Activated CD4-positive, alpha-beta memory T cell treated with anti-CD3 and anti-CD28 coated beads for 36 hours (primary cell): ENCODE measurements at regions of chr1 and their contacts with region 1.

Region 1: GRCh38 chr1:154607609-154608396 is at the start of gene ADAR:
- DNase-seq: peak; percentile 96
- H3K4me3 Mint-ChIP-seq: peak within 1 kb of the TSS; percentile 90
- H3K27ac Mint-ChIP-seq: peak within 1 kb of the TSS; percentile 98
- H3K4me1 Mint-ChIP-seq: peaks cover 71% of the 10 kb centered on the region
- H3K27me3 Mint-ChIP-seq: no peaks in the 10 kb centered on the region
- total RNA-seq, gene ADAR: 270 to 289 TPM

Region 2: DNA sequence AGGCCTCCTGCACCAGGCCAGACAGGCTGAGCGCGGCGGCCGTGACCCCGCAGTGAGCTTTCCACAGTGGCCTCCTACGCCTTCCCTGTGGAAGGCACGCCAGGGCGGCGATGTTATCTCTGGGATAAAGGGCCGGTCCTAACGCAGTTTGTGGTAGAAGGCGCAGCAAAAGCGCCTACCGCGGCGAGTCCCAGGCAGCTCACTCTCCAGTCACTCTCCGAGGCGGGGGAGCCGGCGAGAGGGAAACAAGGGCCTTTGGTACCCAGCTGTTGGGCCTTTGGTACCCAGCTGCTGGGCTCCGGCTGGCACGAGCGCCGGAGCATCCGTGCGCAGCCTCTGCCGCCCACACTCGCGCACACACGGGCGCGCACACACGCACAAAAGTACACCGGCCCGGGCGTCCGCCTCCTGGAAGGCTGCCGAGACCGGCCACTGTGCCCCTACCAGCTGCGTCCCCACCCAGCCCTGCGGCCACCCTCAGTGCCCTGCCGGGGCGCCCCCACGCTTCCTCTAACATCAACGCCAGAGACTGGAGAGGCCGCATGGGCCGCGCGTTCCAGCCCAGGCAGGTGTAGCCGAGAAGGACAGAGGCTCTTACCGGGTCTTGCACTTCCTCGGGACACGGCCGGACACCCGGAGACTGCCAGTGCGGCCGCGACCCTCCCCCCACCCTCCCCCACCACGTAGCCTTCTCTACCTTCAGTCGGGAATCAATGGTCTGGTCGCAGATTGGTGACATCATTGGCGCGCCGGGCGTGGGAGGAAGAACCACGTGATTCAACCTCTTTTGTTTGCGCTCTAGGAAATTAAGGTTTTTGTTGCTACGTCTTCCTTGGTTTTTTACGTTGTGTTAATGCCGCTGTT is 19.7 kb after region 1 on chr1:
- CTCF ChIA-PET with region 1: interaction called, 10 read pairs
- POLR2A ChIA-PET with region 1: interaction called, 18 read pairs
- intact Hi-C with region 1: loop called (anchors 1 kb)
- DNase-seq: peak; percentile 96
- H3K4me3 Mint-ChIP-seq: peak overlapping the region; percentile 93
- H3K27ac Mint-ChIP-seq: peak overlapping the region; percentile 97
- H3K4me1 Mint-ChIP-seq: peaks cover 42% of the 10 kb centered on the region
- H3K27me3 Mint-ChIP-seq: peaks cover 3% of the 10 kb centered on the region